ENCODE measurements at regions of chr11 and their contacts with region 1.

Region 1: DNA sequence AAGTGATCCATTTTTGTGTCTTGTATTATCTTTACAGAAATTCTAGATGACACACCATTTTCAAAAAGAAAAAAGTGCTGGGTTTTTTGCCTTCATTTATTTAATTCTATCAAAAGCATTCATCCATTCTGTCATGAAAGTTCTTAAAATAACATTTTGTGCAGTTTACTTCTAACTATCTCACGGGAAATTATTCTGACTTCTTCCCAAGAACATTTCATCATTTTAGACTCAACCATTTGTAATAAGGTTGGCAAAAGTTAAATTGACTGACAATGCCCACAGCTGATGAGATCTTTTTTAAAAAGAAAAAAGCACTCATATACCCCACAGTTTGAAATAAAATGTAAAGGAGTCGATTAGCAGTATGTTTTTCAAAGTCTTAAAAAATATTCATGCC is 68.5 kb downstream of the SBF2 start:
- DNase-seq: no peak
- ATAC-seq: no peak
- H3K4me3 ChIP-seq: no peak overlapping the region
- H3K27ac ChIP-seq: no peak overlapping the region
- H3K4me1 ChIP-seq: peaks cover 0 to 14% (median 6%) of the 10 kb centered on the region in 12 donors
- H3K27me3 ChIP-seq: no peaks in the 10 kb centered on the region
- CTCF ChIP-seq: no peak
- POLR2A ChIP-seq: no peak

Region 2: GRCh38 chr11:10236850-10237249 is 11.3 kb after region 1 on chr11:
- intact Hi-C with region 1: loop called in 1 of 10 experiments (anchors 2 kb)
- DNase-seq: no peak
- ATAC-seq: no peak
- H3K4me3 ChIP-seq: no peak overlapping the region
- H3K27ac ChIP-seq: no peak overlapping the region
- H3K4me1 ChIP-seq: peaks cover 0 to 9% (median 2%) of the 10 kb centered on the region in 12 donors
- H3K27me3 ChIP-seq: no peaks in the 10 kb centered on the region
- CTCF ChIP-seq: no peak
- POLR2A ChIP-seq: no peak

Measured in heart left ventricle (tissue), 16 donors.